IMR-90 (cell line): ENCODE measurements at regions of chr19 and their contacts with region 1.

Region 1: GRCh38 chr19:6632002-6632621 is 37.8 kb downstream of the TNFSF14 start:
- DNase-seq: peak; percentile 64
- ATAC-seq: peak; percentile 90
- H3K4me3 ChIP-seq: no peak overlapping the region
- H3K27ac ChIP-seq: no peak overlapping the region
- H3K4me1 ChIP-seq: no peaks in the 10 kb centered on the region
- H3K27me3 ChIP-seq: no peaks in the 10 kb centered on the region
- CTCF ChIP-seq: peak; percentile 71
- POLR2A ChIP-seq: no peak
- RAD21 ChIP-seq: peak; percentile 66

Region 2: GRCh38 chr19:6516659-6517291 is 115.3 kb before region 1 on chr19:
- CTCF ChIA-PET with region 1: interaction called, 4 read pairs
- POLR2A ChIA-PET with region 1: interaction called, 6 read pairs
- dilution Hi-C with region 1: no loop called
- in situ Hi-C with region 1: no loop called
- intact Hi-C with region 1: loop called (anchors 1 kb)
- DNase-seq: peak; percentile 62
- ATAC-seq: peak; percentile 86
- H3K4me3 ChIP-seq: peak overlapping the region; percentile 48
- H3K27ac ChIP-seq: no peak overlapping the region
- H3K4me1 ChIP-seq: no peaks in the 10 kb centered on the region
- H3K27me3 ChIP-seq: no peaks in the 10 kb centered on the region
- CTCF ChIP-seq: peak; percentile 91
- POLR2A ChIP-seq: peak; percentile 24; the same call in 1 of the 2 replicates
- RAD21 ChIP-seq: peak; percentile 86

Region 3: DNA sequence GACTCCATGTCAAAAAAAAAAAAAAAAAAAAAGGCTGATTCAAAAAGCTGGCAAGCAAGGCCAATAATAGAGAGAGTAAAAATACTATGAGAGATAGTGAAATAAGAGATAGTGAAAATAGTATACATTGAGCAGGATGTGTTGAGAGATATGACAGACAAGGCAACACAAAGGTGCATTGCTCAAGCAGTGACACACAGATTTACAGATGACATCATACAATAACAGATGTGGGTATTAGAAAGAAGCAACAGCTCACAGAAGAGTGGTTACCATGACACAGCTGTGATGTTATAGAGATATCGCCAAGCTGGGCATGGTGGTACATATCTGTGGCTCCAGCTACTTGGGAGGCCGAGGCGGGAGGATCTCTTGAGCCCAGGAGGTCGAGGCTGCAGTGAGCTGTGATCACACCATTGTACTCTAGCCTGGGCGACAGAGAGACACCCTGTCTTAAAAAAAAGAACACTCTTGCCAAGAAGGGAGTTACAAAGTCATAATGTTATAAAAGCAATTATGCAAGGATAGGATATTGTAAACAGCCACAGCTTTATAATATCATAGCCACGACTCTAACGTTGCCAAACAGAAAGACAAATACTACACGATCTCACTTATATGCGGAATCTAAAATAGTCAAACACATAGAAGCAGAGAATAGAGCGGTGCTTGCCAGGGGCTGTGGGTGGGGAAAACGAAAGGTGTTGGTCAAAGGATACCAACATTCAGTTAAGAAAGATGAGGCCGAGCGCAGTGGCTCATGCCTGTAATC is 91.0 kb before region 1 on chr19:
- CTCF ChIA-PET with region 1: no interaction called
- POLR2A ChIA-PET with region 1: no interaction called
- dilution Hi-C with region 1: no loop called
- in situ Hi-C with region 1: no loop called
- intact Hi-C with region 1: no loop called
- DNase-seq: no peak
- ATAC-seq: no peak
- H3K4me3 ChIP-seq: no peak overlapping the region
- H3K27ac ChIP-seq: no peak overlapping the region
- H3K4me1 ChIP-seq: no peaks in the 10 kb centered on the region
- H3K27me3 ChIP-seq: no peaks in the 10 kb centered on the region
- CTCF ChIP-seq: no peak
- POLR2A ChIP-seq: no peak
- RAD21 ChIP-seq: no peak

Region 4: GRCh38 chr19:6744381-6745291 is 112.5 kb after region 1 on chr19:
- CTCF ChIA-PET with region 1: no interaction called
- POLR2A ChIA-PET with region 1: no interaction called
- dilution Hi-C with region 1: no loop called
- in situ Hi-C with region 1: no loop called
- intact Hi-C with region 1: loop called (anchors 2 kb)
- DNase-seq: peak; percentile 87
- ATAC-seq: peak; percentile 75
- H3K4me3 ChIP-seq: no peak overlapping the region
- H3K27ac ChIP-seq: peak overlapping the region; percentile 85
- H3K4me1 ChIP-seq: peaks cover 27% of the 10 kb centered on the region
- H3K27me3 ChIP-seq: no peaks in the 10 kb centered on the region
- CTCF ChIP-seq: no peak
- POLR2A ChIP-seq: no peak
- RAD21 ChIP-seq: no peak

Region 5: DNA sequence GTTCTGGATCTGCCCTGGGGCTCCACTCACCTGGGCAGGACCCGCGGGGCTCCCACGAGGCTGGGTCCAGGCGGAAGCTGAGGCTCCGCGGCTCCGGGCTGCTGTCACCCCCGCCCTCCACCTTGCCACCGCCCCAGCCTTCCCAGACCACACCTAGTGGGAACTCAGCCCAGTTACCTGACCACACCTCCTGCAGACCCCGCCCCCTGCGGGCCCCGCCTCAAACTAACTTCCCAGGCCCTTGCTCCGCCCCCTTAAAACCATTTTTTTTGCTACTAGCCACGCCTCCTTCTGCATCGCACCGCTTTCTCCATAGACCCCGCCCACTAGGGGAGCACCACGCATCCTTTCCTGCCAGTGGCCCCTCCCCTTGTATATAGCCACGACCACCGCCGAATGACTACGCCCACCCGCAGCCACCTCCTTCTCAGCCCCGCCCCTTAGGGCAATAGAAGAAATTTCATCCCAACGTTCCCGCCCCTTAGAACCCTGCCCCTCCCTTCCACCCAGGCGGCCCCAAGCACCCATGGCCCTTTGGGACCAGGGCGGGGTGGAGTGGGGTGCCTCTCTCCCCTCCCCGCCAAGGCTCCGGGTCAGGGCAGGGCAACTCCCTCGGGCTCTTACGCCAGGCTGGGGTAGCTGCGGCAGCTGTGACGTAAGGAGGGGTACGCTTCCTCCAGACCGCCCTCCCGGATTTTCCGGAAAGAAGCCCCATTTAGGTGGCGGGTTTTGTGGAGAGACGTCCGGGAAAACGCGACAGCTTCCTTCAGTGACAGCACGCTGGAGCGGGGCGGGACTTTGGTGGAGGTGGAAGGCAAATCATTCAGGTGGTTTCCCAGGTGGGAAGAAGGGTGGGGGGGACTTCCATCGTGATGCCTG is 135.5 kb after region 1 on chr19 and contains the start of gene SH2D3A:
- CTCF ChIA-PET with region 1: no interaction called
- POLR2A ChIA-PET with region 1: no interaction called
- dilution Hi-C with region 1: no loop called
- in situ Hi-C with region 1: no loop called
- intact Hi-C with region 1: loop called (anchors 1 kb)
- DNase-seq: peak; percentile 15
- ATAC-seq: peak; percentile 65
- H3K4me3 ChIP-seq: no peak within 1 kb of the TSS
- H3K27ac ChIP-seq: no peak within 1 kb of the TSS
- H3K4me1 ChIP-seq: no peaks in the 10 kb centered on the region
- H3K27me3 ChIP-seq: no peaks in the 10 kb centered on the region; the same call in 1 of the 2 replicates
- CTCF ChIP-seq: no peak
- POLR2A ChIP-seq: no peak
- RAD21 ChIP-seq: no peak
- total RNA-seq, gene SH2D3A: under 0.01 TPM in 1 of 2 replicates, not detected in the other